ENCODE measurements at regions of chr12 and their contacts with region 1.

Region 1: GRCh38 chr12:29519585-29520182 is 22.2 kb upstream of the OVCH1 start:
- DNase-seq: no peak
- H3K4me3 ChIP-seq: no peak overlapping the region
- H3K27ac ChIP-seq: no peak overlapping the region
- H3K4me1 ChIP-seq: no peaks in the 10 kb centered on the region
- H3K27me3 ChIP-seq: no peaks in the 10 kb centered on the region
- CTCF ChIP-seq: peak in 2 of 3 experiments; percentile 19 to 28; a peak in 2 of 4 replicates
- EP300 ChIP-seq: no peak
- POLR2A ChIP-seq: no peak
- RAD21 ChIP-seq: peak; percentile 58 to 71

Region 2: GRCh38 chr12:29531471-29531870 is 11.8 kb after region 1 on chr12:
- CTCF ChIA-PET with region 1: interaction called, 14 read pairs
- POLR2A ChIA-PET with region 1: no interaction called
- DNase-seq: no peak
- H3K4me3 ChIP-seq: no peak overlapping the region
- H3K27ac ChIP-seq: no peak overlapping the region
- H3K4me1 ChIP-seq: peaks cover 0 to 2% (median 0%) of the 10 kb centered on the region in 4 experiments; a peak in 1 of 7 replicates
- H3K27me3 ChIP-seq: no peaks in the 10 kb centered on the region
- CTCF ChIP-seq: no peak
- EP300 ChIP-seq: no peak
- POLR2A ChIP-seq: no peak
- RAD21 ChIP-seq: no peak

Region 3: GRCh38 chr12:29552324-29552927 is 32.7 kb after region 1 on chr12:
- CTCF ChIA-PET with region 1: interaction called, 11 read pairs
- POLR2A ChIA-PET with region 1: no interaction called
- DNase-seq: peak; percentile 13 to 83
- H3K4me3 ChIP-seq: no peak overlapping the region
- H3K27ac ChIP-seq: no peak overlapping the region
- H3K4me1 ChIP-seq: no peaks in the 10 kb centered on the region
- H3K27me3 ChIP-seq: no peaks in the 10 kb centered on the region
- CTCF ChIP-seq: peak; percentile 78 to 87 (median 85)
- EP300 ChIP-seq: no peak
- POLR2A ChIP-seq: no peak
- RAD21 ChIP-seq: peak; percentile 91 to 92

Region 4: DNA sequence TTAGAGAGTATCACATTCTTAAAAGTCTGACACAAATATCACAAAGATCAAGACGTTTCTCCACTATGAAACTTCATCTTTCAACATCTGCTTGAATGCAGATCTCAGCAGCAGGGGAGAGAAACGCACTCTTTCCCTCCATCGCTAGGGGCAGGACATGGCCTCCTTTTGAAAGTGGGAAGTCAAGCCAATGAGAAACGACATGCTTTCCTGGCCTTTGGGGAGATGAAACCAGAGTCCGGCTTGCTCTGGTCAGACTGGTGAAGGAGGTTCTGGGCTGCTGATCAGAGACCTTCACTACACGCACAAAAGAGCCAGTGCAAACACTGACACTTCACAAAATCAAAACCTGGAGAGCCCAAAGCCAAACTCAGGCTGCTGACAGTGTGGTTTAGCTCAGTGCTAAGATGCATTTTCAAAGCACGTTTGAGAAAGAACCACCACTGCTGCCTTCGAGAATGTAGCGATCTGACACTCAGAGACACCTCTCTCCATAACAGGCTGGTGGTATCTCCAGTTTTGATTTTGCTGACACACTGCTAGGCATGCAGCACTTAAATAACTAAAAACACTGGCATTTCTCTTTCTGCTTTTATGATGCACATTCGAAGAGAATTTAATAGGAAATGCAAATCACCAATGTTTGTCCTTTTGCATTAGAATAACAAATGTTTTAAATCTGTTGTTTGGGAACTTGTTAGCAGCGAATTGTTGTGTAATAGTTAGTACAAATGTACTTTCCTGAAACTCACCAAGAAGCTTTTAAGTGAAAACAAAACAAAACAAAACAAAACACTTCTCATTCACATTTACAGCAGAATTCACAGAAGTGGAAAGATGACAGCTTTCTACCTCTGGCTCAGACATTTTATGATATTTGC is 71.7 kb after region 1 on chr12:
- CTCF ChIA-PET with region 1: no interaction called
- POLR2A ChIA-PET with region 1: no interaction called
- DNase-seq: peak in 1 of 2 experiments; percentile 52
- H3K4me3 ChIP-seq: peak overlapping the region in 1 of 4 experiments; percentile 33; a peak in 3 of 8 replicates
- H3K27ac ChIP-seq: peak overlapping the region; percentile 13; the same call in 1 of the 2 replicates
- H3K4me1 ChIP-seq: peaks cover 0 to 6% (median 4%) of the 10 kb centered on the region in 4 experiments; a peak in 5 of 7 replicates
- H3K27me3 ChIP-seq: no peaks in the 10 kb centered on the region; a peak in 1 of 7 replicates
- CTCF ChIP-seq: peak; percentile 46 to 80 (median 57)
- EP300 ChIP-seq: no peak
- POLR2A ChIP-seq: no peak
- RAD21 ChIP-seq: peak; percentile 59 to 65

Region 5: DNA sequence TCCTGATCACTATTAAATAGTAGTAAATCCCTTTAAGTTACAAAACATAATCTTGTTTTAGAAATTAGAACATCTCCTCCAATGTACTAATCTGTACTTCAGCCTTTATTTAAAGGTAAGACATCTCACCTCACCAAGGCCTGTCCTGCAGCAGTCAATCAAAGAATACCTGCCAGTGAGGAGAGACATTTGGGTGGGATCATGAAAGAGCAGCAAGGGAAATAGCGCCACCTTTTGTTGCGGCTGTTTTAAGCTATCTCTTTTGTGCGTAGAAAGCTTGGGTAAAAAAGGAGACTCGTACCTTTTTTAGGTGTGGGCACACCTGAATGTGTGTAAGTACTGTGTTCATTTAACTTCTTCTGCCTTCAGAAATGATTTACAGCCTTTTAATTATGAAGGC is 381.9 kb after region 1 on chr12:
- CTCF ChIA-PET with region 1: interaction called, 25 read pairs
- POLR2A ChIA-PET with region 1: no interaction called
- DNase-seq: peak in 1 of 2 experiments; percentile 74
- H3K4me3 ChIP-seq: no peak overlapping the region
- H3K27ac ChIP-seq: no peak overlapping the region
- H3K4me1 ChIP-seq: no peaks in the 10 kb centered on the region
- H3K27me3 ChIP-seq: no peaks in the 10 kb centered on the region
- CTCF ChIP-seq: peak in 2 of 3 experiments; percentile 68 to 89; a peak in 3 of 4 replicates
- EP300 ChIP-seq: no peak
- POLR2A ChIP-seq: no peak
- RAD21 ChIP-seq: peak; percentile 94 to 95

Measured in H1 (cell line).